ENCODE measurements at regions of chr11 and their contacts with region 1.

Region 1: GRCh38 chr11:74611369-74611861 is 19.0 kb downstream of the POLD3 start:
- DNase-seq: peak; percentile 25
- H3K4me3 ChIP-seq: no peak overlapping the region
- H3K27ac ChIP-seq: no peak overlapping the region
- H3K4me1 ChIP-seq: no peaks in the 10 kb centered on the region
- CTCF ChIP-seq: peak; percentile 75

Region 2: DNA sequence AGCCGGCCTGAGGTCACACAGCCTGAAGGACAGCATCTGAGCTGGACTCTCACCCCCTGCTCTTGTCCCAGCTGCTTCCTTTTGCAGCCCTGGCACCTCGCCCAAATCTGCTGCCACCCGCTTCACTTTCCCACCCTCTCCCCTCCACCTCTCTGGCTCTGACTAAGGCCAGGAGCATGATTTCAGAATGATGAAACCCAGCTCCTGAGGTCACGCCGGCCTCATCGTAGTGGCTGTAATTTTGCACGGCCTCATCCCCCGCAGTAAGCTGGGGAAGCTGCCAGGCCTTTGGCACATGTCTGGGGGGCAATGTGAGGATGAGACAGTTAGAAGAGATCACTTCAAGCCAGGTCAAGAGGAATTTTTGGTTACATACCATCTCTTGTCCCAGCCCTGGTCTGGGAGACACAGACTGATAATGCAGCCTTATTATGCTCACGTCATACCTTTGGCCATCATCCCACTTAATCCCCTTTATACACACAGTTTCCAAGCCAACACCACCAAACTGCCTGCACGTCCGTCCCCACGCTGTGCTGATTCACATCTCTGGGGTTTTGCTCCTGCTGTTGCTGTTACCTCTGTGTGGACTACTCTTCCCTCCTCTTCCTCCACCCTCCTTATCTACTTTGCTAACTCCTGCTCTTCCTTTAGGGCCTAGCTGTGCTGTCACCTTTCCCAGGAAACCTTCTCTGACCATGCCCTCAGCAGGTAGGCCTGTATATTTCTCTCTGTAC is 61.7 kb after region 1 on chr11:
- CTCF ChIA-PET with region 1: no interaction called
- POLR2A ChIA-PET with region 1: no interaction called
- intact Hi-C with region 1: loop called (anchors 10 kb)
- DNase-seq: no peak
- H3K4me3 ChIP-seq: no peak overlapping the region
- H3K27ac ChIP-seq: no peak overlapping the region
- H3K4me1 ChIP-seq: no peaks in the 10 kb centered on the region
- CTCF ChIP-seq: no peak

Region 3: DNA sequence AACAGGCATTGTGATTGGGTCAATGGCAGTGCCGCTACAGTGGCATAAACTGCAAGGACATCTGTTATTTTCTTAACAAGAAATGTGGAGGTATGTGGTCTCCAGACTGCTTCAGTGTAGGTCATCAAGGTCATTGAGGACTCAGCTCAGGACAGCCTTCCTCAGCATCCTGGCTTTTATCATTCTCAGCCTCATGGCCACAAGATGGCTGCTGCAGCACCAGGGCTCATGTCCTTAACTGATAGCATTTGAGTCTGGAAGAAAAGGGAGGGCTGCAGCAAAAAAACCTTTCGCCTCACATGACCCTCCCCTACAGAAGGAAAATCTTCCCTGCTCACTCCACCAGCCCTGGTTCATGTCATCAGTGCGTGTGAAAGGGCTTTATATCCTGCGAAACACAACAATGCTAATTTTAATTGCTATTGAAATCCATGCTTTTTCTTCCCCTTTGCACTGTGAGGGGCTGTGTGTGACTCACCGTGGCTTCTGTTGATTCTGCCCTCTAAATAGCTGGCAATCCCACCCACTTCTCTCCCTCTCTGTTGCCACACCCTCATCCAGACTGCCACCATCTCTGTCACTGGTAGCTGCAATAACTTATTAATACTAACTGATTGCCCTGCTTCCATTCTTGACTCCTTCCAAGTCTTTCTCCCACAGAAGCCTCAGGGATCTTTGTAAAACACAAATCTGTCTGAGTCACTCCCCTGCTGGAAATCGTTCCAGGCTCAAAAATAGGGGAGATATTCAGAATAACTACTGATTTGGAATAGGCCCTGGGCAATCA is 76.0 kb after region 1 on chr11:
- CTCF ChIA-PET with region 1: no interaction called
- POLR2A ChIA-PET with region 1: no interaction called
- intact Hi-C with region 1: no loop called
- DNase-seq: no peak
- H3K4me3 ChIP-seq: no peak overlapping the region
- H3K27ac ChIP-seq: no peak overlapping the region
- H3K4me1 ChIP-seq: no peaks in the 10 kb centered on the region
- CTCF ChIP-seq: no peak

Region 4: DNA sequence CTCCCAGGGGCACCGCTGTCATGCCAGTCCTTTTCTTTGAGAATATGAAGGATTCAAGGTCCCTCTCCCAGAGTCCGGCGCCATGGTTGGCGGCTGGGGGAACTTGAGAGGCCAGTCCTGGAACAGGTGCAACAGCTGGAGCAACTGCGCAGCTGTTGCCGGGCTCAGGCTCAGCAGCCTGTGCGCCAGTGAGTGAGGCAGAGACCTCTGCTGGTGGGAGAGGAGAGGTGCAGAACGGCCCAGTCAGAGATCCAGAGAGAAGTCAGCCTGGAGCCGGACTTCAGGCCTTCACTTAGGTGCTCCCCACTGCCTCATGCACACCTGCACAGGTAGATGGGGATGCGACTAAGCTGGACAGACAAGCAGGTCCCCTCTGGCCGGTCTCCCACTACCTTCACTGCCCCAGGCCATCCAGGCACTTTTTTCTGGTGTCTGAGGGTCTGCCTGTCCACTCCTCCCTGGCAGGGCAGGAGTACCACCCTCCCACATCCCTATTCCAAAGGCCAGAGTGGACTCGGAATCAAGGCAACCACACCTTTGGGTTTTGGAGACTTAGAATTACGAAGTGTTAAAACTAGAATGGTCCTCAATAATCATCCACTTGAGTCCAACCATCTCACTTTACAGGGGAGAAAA is 115.2 kb after region 1 on chr11:
- CTCF ChIA-PET with region 1: no interaction called
- POLR2A ChIA-PET with region 1: no interaction called
- intact Hi-C with region 1: loop called (anchors 2 kb)
- DNase-seq: peak; percentile 73
- H3K4me3 ChIP-seq: no peak overlapping the region
- H3K27ac ChIP-seq: no peak overlapping the region
- H3K4me1 ChIP-seq: no peaks in the 10 kb centered on the region
- CTCF ChIP-seq: peak; percentile 89